Mammary epithelial cell (primary cell): ENCODE measurements at regions of chr12 and their contacts with region 1.

Region 1: GRCh38 chr12:109775172-109775881 is 57.9 kb downstream of the TRPV4 start:
- DNase-seq: peak; percentile 52
- H3K4me3 ChIP-seq: no peak overlapping the region
- H3K27ac ChIP-seq: no peak overlapping the region
- H3K4me1 ChIP-seq: peaks cover 18% of the 10 kb centered on the region
- H3K27me3 ChIP-seq: no peaks in the 10 kb centered on the region
- CTCF ChIP-seq: peak; percentile 94 to 97

Region 2: DNA sequence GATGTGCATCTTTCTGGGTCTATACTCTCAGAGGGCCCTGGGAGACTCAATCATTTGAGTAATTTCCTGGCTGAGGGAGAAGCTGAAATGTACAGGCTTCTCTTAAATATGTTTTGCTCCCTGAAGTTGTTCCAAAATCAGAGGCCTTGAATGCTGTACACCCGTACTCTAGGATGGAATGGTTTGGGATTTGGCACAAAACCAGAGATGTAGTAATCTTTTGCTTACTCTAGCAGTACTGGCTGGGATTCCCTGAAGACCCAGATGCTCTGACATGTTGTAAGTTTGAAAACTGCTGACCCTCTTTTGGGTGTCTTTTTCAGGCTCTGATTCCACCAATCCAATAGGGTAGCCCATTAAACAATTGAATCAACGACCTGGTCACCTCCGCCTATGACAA is 648.5 kb before region 1 on chr12:
- CTCF ChIA-PET with region 1: no interaction called
- dilution Hi-C with region 1: no loop called
- in situ Hi-C with region 1: no loop called
- intact Hi-C with region 1: loop called (anchors 10 kb)
- DNase-seq: no peak
- H3K4me3 ChIP-seq: no peak overlapping the region
- H3K27ac ChIP-seq: no peak overlapping the region
- H3K4me1 ChIP-seq: no peaks in the 10 kb centered on the region
- H3K27me3 ChIP-seq: no peaks in the 10 kb centered on the region
- CTCF ChIP-seq: no peak

Region 3: GRCh38 chr12:109529691-109530640 is 245.4 kb before region 1 on chr12:
- CTCF ChIA-PET with region 1: no interaction called
- dilution Hi-C with region 1: loop called (anchors 5 kb)
- in situ Hi-C with region 1: loop called in 1 of 2 experiments (anchors 10 kb)
- intact Hi-C with region 1: no loop called
- DNase-seq: no peak
- H3K4me3 ChIP-seq: no peak overlapping the region
- H3K27ac ChIP-seq: no peak overlapping the region
- H3K4me1 ChIP-seq: no peaks in the 10 kb centered on the region
- H3K27me3 ChIP-seq: no peaks in the 10 kb centered on the region
- CTCF ChIP-seq: no peak

Region 4: GRCh38 chr12:109597795-109598427 is 177.4 kb before region 1 on chr12:
- CTCF ChIA-PET with region 1: interaction called, 6 read pairs
- dilution Hi-C with region 1: no loop called
- in situ Hi-C with region 1: loop called in 1 of 2 experiments (anchors 5 kb)
- intact Hi-C with region 1: loop called (anchors 1 kb)
- DNase-seq: peak; percentile 62
- H3K4me3 ChIP-seq: no peak overlapping the region
- H3K27ac ChIP-seq: no peak overlapping the region
- H3K4me1 ChIP-seq: peaks cover 5% of the 10 kb centered on the region
- H3K27me3 ChIP-seq: no peaks in the 10 kb centered on the region
- CTCF ChIP-seq: peak; percentile 91 to 97

Region 5: GRCh38 chr12:109713187-109713984 is 61.9 kb before region 1 on chr12 and contains the start of gene FAM222A:
- CTCF ChIA-PET with region 1: no interaction called
- dilution Hi-C with region 1: no loop called
- in situ Hi-C with region 1: no loop called
- intact Hi-C with region 1: loop called (anchors 2 kb)
- DNase-seq: peak; percentile 95
- H3K4me3 ChIP-seq: peak within 1 kb of the TSS; percentile 21 to 59 (median 45)
- H3K27ac ChIP-seq: no peak within 1 kb of the TSS
- H3K4me1 ChIP-seq: peaks cover 5% of the 10 kb centered on the region
- H3K27me3 ChIP-seq: peaks cover 4% of the 10 kb centered on the region
- CTCF ChIP-seq: no peak
- total RNA-seq, gene FAM222A: 0.50 to 1.3 TPM

Region 6: GRCh38 chr12:109808876-109809646 is 33.7 kb after region 1 on chr12:
- CTCF ChIA-PET with region 1: no interaction called
- dilution Hi-C with region 1: no loop called
- in situ Hi-C with region 1: no loop called
- intact Hi-C with region 1: no loop called
- DNase-seq: no peak
- H3K4me3 ChIP-seq: no peak overlapping the region
- H3K27ac ChIP-seq: no peak overlapping the region
- H3K4me1 ChIP-seq: no peaks in the 10 kb centered on the region
- H3K27me3 ChIP-seq: no peaks in the 10 kb centered on the region
- CTCF ChIP-seq: no peak

Region 7: GRCh38 chr12:109925185-109925840 is 150.0 kb after region 1 on chr12:
- CTCF ChIA-PET with region 1: no interaction called
- dilution Hi-C with region 1: no loop called
- in situ Hi-C with region 1: no loop called
- intact Hi-C with region 1: no loop called
- DNase-seq: no peak
- H3K4me3 ChIP-seq: no peak overlapping the region
- H3K27ac ChIP-seq: no peak overlapping the region
- H3K4me1 ChIP-seq: no peaks in the 10 kb centered on the region
- H3K27me3 ChIP-seq: no peaks in the 10 kb centered on the region
- CTCF ChIP-seq: no peak

Region 8: GRCh38 chr12:110088936-110089335 is 313.6 kb after region 1 on chr12:
- CTCF ChIA-PET with region 1: no interaction called
- dilution Hi-C with region 1: no loop called
- in situ Hi-C with region 1: no loop called
- intact Hi-C with region 1: no loop called
- DNase-seq: no peak
- H3K4me3 ChIP-seq: no peak overlapping the region
- H3K27ac ChIP-seq: no peak overlapping the region
- H3K4me1 ChIP-seq: no peaks in the 10 kb centered on the region
- H3K27me3 ChIP-seq: peaks cover 2% of the 10 kb centered on the region
- CTCF ChIP-seq: no peak